Head of caudate nucleus (tissue), 42 donors: ENCODE measurements at regions of chr11 and their contacts with region 1.

Region 1: DNA sequence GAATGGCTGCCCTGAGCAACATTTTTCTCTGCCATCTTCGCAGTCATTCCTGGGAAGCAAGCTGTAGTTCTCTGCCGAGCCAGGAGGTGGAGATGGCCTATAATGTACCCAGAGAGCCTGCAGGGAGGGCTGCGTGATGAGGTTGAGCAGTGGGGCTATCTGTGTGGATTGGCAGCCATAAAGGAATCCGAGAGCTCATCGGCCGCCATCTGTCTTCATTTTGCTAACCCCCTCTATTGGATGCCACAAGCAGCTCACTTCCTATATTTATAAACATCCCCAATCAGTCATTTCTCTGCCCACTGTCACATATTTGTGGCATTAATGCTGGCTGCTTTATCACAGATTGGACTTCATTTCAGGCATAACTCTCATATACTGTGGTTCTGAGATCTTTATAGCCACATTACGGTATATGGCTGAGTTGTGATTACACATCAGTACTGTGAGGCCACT is 209.5 kb downstream of the NTM start:
- DNase-seq: peak in 29 of 42 donors; percentile 39 to 88 (median 64)

Region 2: DNA sequence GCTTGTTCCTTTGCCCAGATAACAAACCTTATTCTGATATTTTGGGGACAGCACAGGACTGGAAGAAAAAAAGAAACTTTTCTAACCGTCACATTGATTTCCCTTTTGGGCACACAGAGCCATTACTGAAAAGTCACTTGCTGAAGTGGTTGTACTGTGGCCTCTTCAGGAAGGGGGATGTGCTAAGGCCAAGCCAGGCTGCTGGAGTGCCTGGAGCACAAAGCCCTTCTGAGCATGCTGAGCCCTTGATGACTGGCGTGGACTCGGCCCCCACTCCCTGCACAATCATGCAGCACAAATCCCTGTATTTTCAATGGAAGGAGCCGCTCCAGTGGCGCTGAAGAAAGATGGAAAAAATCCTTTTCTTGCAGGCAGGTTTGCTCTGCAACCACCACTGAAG is 45.3 kb before region 1 on chr11:
- intact Hi-C with region 1: loop called (anchors 5 kb)
- DNase-seq: peak in 40 of 42 donors; percentile 47 to 88 (median 68)